ENCODE measurements at regions of chr9 and their contacts with region 1.

Region 1: GRCh38 chr9:113484258-113484730 is 20.8 kb downstream of the RGS3 start:
- DNase-seq: peak; percentile 82 to 88 (median 83)
- ATAC-seq: peak; percentile 66 to 80 (median 72)
- H3K4me3 ChIP-seq: no peak overlapping the region
- H3K27ac ChIP-seq: peak overlapping the region; percentile 18 to 87 (median 74)
- H3K4me1 ChIP-seq: peaks cover 9 to 53% (median 31%) of the 10 kb centered on the region in 12 donors
- H3K27me3 ChIP-seq: no peaks in the 10 kb centered on the region
- CTCF ChIP-seq: no peak
- POLR2A ChIP-seq: no peak

Region 2: DNA sequence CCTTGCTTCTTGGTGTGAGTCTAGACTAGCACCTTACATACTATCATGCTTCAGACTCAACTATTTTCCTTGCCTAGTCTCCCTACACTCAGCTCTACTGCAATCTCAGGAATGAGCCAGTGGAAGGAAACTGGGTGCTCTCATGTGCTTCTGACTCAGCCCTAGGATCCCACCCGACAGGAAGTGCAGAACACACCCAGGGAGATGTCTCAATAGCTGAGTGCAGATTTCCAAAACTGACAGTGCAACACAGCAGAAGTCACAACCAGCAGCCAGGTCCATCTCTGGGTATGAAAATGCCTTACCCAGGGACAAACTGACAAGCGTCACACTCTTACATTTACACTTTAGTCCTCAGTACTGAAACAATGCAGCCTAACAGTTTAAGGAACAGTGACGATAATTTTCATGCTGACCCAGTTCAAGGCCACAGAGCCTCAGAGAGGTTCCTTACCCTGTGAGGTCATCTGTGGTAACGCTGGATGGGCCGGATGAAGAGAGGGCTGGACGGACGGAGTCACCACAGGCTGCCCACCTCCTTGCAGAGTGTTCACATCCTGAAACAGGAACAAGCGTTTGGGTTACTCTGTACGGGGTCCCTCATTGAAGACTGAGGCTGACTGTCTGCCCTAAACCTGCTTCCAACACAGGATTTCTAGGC is 296.2 kb before region 1 on chr9:
- intact Hi-C with region 1: no loop called
- DNase-seq: peak; percentile 26 to 70 (median 41)
- ATAC-seq: peak; percentile 78 to 96 (median 95)
- H3K4me3 ChIP-seq: peak overlapping the region in 2 of 12 donors; percentile 6 to 37
- H3K27ac ChIP-seq: peak overlapping the region in 10 of 12 donors; percentile 14 to 89 (median 44)
- H3K4me1 ChIP-seq: peaks cover 0 to 36% (median 0%) of the 10 kb centered on the region in 12 donors
- H3K27me3 ChIP-seq: no peaks in the 10 kb centered on the region
- CTCF ChIP-seq: no peak
- POLR2A ChIP-seq: peak in 1 of 2 donors; percentile 39

Region 3: DNA sequence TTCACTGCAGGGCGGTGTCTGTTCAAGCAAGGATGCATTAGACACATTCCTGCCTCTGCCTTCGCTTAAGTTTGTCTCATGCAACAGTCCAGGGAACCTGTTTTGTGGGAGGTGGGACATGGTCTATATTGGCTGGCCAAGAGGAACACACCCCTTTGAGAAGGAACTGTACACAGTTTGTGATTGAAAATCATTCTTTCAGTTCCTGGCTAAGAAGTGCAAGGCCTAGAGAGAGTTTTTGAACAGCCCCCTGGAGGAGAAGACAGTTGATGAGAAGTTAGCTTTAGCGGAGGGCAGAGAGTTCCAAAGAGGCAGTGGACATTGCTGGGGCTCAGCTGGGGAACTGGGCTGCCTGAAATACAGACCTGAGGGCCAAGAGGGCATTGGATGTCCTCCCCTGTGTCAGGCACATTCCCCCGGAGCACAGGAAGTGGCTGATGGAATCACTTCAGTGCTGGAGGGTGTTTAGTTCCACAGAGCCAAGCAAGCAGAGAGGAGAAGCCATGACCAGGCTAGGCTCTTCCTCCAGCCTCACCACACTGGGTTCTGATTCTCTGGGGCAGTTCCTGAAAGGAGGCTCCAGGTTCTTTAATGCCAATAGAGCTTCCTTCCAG is 45.8 kb after region 1 on chr9:
- intact Hi-C with region 1: loop called in 1 of 10 experiments (anchors 5 kb)
- DNase-seq: no peak
- ATAC-seq: no peak
- H3K4me3 ChIP-seq: no peak overlapping the region
- H3K27ac ChIP-seq: peak overlapping the region in 1 of 12 donors; percentile 4
- H3K4me1 ChIP-seq: peaks cover 0 to 65% (median 38%) of the 10 kb centered on the region in 12 donors
- H3K27me3 ChIP-seq: no peaks in the 10 kb centered on the region
- CTCF ChIP-seq: no peak
- POLR2A ChIP-seq: no peak